Activated T-helper 1 cell treated with anti-CD3 and anti-CD28 coated beads, Interleukin-12 subunit alpha, Interleukin-12 subunit beta, Interleukin-2, Interleukin-4 antibody, amounts not matched to agents 30 ng/mL and 10 ng/mL and 1 ng/mL, durations not matched to agents 14 hours and 24 hours and 36 hours (primary cell): ENCODE measurements at regions of chr13 and their contacts with region 1.

Region 1: GRCh38 chr13:35720690-35721554 is 244.4 kb upstream of the MAB21L1 start:
- DNase-seq: peak; percentile 1
- H3K4me3 Mint-ChIP-seq: no peak overlapping the region
- H3K27ac Mint-ChIP-seq: no peak overlapping the region
- H3K4me1 Mint-ChIP-seq: peaks cover 8% of the 10 kb centered on the region
- H3K27me3 Mint-ChIP-seq: peaks cover 10% of the 10 kb centered on the region

Region 2: DNA sequence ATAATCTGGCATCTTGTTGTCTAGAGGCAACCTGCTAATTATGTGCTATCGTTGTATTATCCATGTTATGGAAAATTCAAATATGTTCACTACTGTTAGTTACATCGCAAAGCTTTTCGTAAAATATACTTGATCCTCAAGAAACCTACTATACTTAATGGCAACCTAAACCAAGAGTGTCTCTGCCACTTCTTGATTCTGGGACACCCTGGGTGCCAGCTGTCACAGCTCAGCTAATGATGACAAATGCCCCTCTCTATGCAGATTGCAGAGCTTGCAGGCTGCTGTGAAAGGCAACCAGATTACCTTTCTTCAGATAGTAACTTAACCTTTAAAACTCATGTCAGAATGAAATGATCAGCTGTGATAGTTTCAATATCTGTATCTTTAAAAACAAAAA is 235.5 kb before region 1 on chr13:
- intact Hi-C with region 1: no loop called
- DNase-seq: no peak
- H3K4me3 Mint-ChIP-seq: no peak overlapping the region
- H3K27ac Mint-ChIP-seq: no peak overlapping the region
- H3K4me1 Mint-ChIP-seq: no peaks in the 10 kb centered on the region
- H3K27me3 Mint-ChIP-seq: peaks cover 4% of the 10 kb centered on the region

Region 3: DNA sequence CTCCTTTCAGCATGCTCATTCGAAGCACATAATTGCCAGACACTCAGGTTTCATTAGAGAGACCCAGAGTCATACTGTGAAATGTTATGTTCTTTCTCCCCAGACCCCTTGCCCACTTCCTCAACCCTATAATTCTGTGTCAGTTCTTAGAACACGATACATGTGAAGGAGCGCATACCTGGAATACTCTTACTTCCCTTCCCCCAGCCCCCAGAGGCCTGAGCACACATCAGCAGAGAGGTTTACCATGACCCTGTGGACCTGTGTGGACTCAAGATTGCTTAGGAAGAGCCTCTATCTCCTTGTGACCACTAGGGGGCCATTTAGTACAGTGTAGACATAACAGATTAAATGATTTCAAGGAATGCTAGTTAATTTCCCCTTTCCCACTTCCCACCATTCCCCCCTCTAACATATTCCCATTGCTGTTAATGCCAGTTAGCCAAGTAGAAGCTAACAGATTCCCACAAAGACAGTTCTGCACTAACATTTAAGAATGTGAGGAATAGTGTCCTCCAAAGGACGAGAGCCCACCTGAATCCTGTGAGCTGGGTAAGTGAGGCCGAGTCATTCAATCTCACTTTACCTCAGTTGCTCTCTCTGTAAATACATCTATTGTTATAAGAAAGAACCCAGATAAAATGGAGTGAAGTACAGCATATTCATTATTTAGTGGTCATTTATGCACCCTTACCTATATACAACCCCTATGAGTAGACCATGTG is 90.2 kb before region 1 on chr13:
- intact Hi-C with region 1: loop called (anchors 2 kb)
- DNase-seq: no peak
- H3K4me3 Mint-ChIP-seq: no peak overlapping the region
- H3K27ac Mint-ChIP-seq: no peak overlapping the region
- H3K4me1 Mint-ChIP-seq: no peaks in the 10 kb centered on the region
- H3K27me3 Mint-ChIP-seq: no peaks in the 10 kb centered on the region

Region 4: GRCh38 chr13:35700661-35701060 is 20.3 kb before region 1 on chr13:
- intact Hi-C with region 1: no loop called
- DNase-seq: no peak
- H3K4me3 Mint-ChIP-seq: no peak overlapping the region
- H3K27ac Mint-ChIP-seq: no peak overlapping the region
- H3K4me1 Mint-ChIP-seq: no peaks in the 10 kb centered on the region
- H3K27me3 Mint-ChIP-seq: no peaks in the 10 kb centered on the region